ENCODE measurements at regions of chr7 and their contacts with region 1.

Region 1: DNA sequence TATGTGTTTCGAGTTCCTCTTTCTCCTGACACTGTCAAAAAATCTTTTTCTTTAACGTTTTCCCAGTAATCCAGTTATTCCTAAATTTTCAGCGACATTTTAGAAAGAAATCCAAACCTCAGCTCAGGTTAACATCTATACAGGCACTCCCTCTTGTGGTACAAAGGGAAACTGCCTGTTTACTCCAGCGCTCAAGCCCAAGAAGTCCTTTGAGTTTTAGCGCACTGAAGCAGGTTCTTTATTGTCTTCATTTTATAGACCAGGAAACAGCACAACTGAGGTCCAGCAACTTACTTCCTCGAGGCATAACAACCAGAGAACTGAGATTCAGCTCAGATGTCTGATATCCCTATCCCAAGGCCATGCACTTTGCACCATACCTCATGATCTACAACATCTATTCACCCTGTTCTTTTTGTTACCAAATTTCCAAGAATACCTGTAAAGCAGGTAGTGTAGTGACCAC is 287.2 kb upstream of the MKLN1 start:
- DNase-seq: peak; percentile 52
- H3K4me3 Mint-ChIP-seq: no peak overlapping the region
- H3K27ac Mint-ChIP-seq: no peak overlapping the region
- H3K4me1 Mint-ChIP-seq: peaks cover 47% of the 10 kb centered on the region
- H3K27me3 Mint-ChIP-seq: no peaks in the 10 kb centered on the region

Region 2: GRCh38 chr7:130904031-130904757 is 136.3 kb before region 1 on chr7:
- CTCF ChIA-PET with region 1: interaction called, 57 read pairs
- POLR2A ChIA-PET with region 1: interaction called, 4 read pairs
- DNase-seq: no peak
- H3K4me3 Mint-ChIP-seq: no peak overlapping the region
- H3K27ac Mint-ChIP-seq: peak overlapping the region; percentile 71
- H3K4me1 Mint-ChIP-seq: peaks cover 84% of the 10 kb centered on the region
- H3K27me3 Mint-ChIP-seq: no peaks in the 10 kb centered on the region

Region 3: DNA sequence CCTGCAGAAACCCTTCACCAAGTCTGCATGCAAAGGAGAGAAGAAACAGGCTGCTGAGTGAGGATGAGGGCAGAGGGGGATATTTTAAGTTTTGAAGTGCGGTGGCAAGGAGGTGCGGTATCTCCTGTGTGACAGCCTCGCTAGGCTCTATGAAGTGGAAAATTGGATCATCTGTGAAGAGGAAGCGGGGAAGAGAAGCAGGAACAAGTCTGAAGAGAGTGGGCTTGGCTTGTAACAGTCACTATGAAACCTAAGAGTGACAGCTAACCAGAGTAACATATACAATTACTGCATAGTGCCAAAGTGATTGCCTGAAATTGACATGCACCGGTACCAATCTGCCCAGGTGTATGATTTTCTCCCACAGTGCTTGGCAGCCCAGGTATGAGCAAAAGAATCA is 19.0 kb before region 1 on chr7:
- CTCF ChIA-PET with region 1: interaction called, 14 read pairs
- POLR2A ChIA-PET with region 1: interaction called, 3 read pairs
- DNase-seq: no peak
- H3K4me3 Mint-ChIP-seq: peak overlapping the region; percentile 57
- H3K27ac Mint-ChIP-seq: peak overlapping the region; percentile 82
- H3K4me1 Mint-ChIP-seq: peaks cover 78% of the 10 kb centered on the region
- H3K27me3 Mint-ChIP-seq: no peaks in the 10 kb centered on the region

Region 4: DNA sequence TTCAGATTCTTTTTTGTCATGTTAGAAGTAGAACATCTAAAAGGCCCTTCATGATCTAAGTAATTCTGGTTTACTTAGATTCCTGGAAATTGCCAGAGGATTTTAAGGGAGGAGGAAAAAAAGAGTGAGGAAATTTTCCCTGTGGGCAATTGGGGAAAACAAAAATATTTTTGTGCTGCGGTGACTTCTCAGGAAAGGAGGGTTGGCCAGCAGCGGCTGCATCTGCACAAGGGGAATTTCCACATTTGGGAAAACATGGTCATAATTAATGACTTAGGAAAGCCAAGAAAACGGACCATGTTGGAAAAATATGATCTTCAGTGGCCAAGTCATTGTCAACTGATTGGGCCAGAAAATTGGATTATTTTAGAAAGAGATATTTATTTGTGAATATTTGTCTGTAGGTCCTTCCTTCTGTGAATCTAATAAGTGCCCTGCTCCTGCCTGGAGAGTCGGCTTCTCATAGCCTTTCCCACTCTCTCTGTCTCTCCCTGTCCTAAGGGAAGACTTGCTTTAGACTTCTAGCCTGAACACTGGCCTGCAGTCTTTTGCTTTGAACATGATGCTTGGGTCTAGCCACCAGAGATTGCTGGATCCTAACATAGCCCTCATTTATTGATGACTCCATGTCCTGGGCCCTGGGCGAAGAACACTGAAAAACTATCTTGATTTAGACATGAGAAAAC is 162.9 kb after region 1 on chr7:
- CTCF ChIA-PET with region 1: no interaction called
- POLR2A ChIA-PET with region 1: no interaction called
- DNase-seq: no peak
- H3K4me3 Mint-ChIP-seq: no peak overlapping the region
- H3K27ac Mint-ChIP-seq: no peak overlapping the region
- H3K4me1 Mint-ChIP-seq: no peaks in the 10 kb centered on the region
- H3K27me3 Mint-ChIP-seq: no peaks in the 10 kb centered on the region

Region 5: DNA sequence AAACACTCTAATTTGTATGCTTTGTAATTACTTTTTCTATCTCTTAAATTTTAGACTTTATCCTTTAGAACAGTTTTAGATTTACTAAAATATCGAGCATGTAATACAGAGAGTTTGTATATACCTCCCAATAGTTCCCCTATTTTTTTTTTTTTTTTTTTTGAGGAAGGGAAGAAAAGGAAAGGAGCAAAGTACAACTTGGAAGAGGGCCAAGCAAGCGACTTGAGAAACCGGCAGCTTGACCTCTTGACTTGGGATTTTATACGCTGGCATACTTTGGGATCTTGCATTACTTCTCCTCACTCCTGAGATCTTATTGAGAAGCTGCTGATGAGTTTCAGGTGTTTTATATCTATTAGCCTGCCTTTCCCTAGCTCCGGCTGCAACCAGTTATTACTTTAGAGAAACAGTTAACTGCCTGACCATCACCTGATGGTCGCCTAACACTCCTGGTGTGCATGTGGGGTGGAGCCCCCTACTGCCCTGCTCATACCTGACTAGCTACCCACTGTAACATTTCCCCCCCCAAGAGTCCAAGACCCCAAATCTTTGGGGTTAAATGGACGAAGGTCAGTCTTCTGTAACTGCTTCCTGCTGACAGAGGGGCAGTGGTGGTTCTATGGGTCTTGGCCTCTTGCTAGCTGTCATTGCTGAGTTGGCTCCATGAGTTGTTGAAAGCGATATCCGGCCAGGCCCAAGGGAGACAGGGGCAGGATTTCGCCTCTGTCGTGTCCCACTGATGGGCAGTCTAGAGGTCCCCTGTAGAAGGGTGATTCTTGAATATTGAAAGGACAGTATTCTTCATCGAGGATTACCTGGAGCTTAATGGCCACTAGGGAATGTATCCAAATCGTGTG is 315.6 kb after region 1 on chr7:
- CTCF ChIA-PET with region 1: no interaction called
- POLR2A ChIA-PET with region 1: no interaction called
- DNase-seq: no peak
- H3K4me3 Mint-ChIP-seq: no peak overlapping the region
- H3K27ac Mint-ChIP-seq: no peak overlapping the region
- H3K4me1 Mint-ChIP-seq: peaks cover 36% of the 10 kb centered on the region
- H3K27me3 Mint-ChIP-seq: no peaks in the 10 kb centered on the region